ENCODE measurements at regions of chr6 and their contacts with region 1.

Region 1: DNA sequence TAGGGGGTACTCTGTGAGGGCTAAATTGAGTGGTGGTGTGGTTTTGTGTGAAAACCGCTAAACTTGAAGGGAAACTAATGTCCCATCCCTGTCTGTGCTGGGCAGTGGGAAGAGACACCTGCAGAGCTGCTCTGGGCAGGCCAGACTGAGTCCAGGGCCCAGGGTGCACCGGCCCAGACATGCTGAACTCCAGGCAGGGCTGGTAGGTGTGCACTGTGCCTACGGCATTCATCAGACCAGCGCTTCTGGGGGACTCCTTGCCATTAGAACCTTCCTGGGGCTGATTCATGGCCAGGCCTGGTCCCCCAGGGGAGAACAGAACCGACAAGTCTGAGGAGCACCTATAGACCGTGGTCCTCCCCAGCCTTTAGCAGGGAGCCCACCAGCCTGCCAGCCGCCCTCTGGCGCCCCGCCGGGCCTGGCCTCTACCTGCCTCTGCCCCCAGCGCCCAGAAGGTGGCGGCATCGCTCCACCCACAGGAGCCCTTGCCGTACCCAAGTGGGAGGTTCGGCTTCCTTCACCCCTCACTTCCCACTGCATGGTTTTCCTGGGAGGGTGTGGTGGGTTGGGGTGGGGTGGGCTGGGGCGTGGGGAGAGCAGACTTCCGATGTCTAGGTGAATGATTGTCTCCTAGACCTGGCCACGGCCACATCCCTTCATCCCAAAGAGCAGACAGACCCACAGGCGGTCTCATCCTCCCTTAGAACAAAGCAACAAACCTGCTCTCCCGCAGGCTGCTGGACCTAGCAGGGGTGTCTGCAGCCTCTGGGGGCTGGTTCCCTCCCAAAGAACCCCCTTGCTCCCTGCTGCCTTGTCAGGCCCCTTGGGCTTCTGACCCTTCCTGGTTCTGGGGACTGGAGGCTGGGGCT is 15.5 kb downstream of the CCDC167 start:
- DNase-seq: peak; percentile 52
- H3K4me3 Mint-ChIP-seq: no peak overlapping the region
- H3K27ac Mint-ChIP-seq: no peak overlapping the region
- H3K4me1 Mint-ChIP-seq: peaks cover 8% of the 10 kb centered on the region
- H3K27me3 Mint-ChIP-seq: no peaks in the 10 kb centered on the region

Region 2: DNA sequence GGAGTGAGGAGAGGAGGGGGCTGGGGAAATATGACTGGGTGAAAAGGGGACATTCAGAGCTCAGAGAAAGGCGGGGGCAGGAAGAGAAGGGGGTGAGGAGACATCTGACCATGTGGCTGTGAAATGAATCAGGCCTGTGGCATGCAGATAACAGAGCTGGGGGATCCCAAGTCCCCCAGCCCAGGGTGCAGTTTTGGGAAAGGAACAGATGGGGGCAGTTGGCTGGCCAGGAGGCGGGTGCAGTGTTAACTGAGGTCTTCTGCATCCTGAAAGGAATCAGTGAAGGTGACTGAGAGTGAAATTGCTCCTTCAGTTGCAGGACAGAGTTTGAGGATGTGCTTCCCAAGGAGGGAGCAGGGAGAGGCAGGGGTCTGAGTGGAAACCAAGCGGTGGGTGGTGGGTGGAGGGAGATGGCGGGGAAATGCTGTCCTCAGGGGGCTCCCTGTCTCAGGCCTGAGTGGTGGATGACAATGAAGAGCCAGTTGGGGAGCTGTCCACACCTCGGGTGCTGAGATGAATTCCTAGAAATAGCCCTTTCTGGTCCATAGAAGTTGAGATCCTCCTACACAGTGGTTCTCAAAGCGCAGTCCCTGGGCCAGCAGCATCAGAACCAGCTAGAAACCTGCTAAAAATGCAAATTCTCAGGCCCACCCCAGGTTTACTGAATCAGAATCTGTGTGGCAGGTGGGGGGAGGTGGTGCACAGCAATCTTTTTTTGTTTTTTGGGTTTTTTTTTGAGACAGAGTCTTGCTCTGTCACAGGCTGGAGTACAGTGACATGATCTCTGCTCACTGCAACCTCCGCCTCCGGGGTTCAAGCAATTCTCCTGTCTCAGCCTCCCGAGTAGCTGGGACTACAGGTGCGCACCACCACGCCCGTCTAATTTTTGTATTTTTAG is 41.6 kb after region 1 on chr6:
- intact Hi-C with region 1: no loop called
- DNase-seq: no peak
- H3K4me3 Mint-ChIP-seq: no peak overlapping the region
- H3K27ac Mint-ChIP-seq: no peak overlapping the region
- H3K4me1 Mint-ChIP-seq: peaks cover 2% of the 10 kb centered on the region
- H3K27me3 Mint-ChIP-seq: peaks cover 15% of the 10 kb centered on the region

Region 3: GRCh38 chr6:37547564-37548061 is 63.5 kb after region 1 on chr6:
- intact Hi-C with region 1: no loop called
- DNase-seq: no peak
- H3K4me3 Mint-ChIP-seq: no peak overlapping the region
- H3K27ac Mint-ChIP-seq: no peak overlapping the region
- H3K4me1 Mint-ChIP-seq: peaks cover 9% of the 10 kb centered on the region
- H3K27me3 Mint-ChIP-seq: peaks cover 4% of the 10 kb centered on the region

Region 4: DNA sequence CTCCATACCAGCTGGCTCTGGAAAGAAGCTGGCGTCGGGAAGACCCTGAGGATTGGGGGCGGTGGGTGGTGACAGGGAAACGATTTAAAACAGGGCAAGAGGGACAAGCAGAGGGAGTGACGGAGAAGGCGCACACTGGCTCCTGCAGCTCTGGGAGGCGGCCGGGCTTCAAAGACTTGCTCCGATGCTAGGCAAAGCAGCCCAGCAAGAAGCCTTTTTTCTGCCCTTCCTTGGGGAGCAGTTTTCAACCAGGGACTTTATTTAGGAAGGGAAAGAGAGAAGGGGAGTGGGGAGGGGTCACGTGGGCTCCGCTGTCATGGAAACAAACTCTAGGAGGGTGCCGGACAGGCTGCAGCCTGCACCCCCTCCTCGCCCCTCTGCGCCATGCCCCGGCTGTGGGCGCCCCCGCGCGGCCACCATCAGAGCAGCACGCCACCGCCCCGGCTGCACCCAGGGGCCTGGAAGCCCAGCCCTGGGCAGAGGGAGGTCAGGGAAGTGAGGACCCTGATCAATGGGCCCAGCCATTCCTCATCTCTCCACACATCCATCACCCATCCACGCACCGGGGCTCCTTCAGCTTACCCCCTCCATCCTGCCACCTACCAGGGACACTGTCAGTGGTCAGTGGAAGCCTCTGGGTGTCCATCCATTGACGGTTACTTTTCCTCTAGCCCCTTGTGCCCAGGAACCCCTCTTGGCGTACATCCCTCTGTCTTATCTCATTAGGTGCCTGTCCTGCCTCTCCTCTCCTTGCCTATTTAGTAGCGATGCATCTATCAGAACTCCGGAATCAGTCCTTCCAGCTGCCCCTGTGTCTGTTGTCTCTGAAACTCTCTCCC is 82.2 kb after region 1 on chr6:
- intact Hi-C with region 1: loop called (anchors 1 kb)
- DNase-seq: peak; percentile 58
- H3K4me3 Mint-ChIP-seq: no peak overlapping the region
- H3K27ac Mint-ChIP-seq: no peak overlapping the region
- H3K4me1 Mint-ChIP-seq: no peaks in the 10 kb centered on the region
- H3K27me3 Mint-ChIP-seq: peaks cover 19% of the 10 kb centered on the region

Region 5: GRCh38 chr6:37691904-37692806 is 208.0 kb after region 1 on chr6:
- intact Hi-C with region 1: loop called (anchors 1 kb)
- DNase-seq: peak; percentile 64
- H3K4me3 Mint-ChIP-seq: no peak overlapping the region
- H3K27ac Mint-ChIP-seq: no peak overlapping the region
- H3K4me1 Mint-ChIP-seq: peaks cover 22% of the 10 kb centered on the region
- H3K27me3 Mint-ChIP-seq: peaks cover 45% of the 10 kb centered on the region